ENCODE measurements at regions of chr1 and their contacts with region 1.

Region 1: GRCh38 chr1:210360852-210361477 is 32.3 kb downstream of the HHAT start:
- H3K4me3 ChIP-seq: no peak overlapping the region
- H3K27ac ChIP-seq: no peak overlapping the region
- H3K4me1 ChIP-seq: no peaks in the 10 kb centered on the region
- CTCF ChIP-seq: peak; percentile 44; the same call in 1 of the 2 replicates

Region 2: DNA sequence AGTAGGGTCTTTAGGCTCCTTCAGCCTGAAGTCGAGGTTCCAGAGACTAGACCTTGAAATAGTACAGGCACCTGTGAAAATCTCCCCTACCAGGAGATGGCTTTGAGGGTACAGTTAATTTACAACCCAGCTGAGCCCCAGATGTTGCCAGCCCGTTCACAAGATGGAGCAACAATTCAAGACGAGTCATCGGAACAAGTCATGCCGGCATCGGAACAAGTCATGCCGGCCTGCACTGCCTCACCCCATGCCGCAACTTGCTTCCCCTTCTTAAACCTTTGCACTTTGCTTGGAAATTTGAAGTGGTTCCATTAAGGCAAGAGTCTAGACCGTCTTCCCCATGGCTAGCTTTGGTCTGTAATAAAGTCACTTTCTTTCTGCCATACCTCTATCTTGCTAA is 16.3 kb before region 1 on chr1:
- CTCF ChIA-PET with region 1: interaction called, 25 read pairs
- POLR2A ChIA-PET with region 1: no interaction called
- H3K4me3 ChIP-seq: no peak overlapping the region
- H3K27ac ChIP-seq: no peak overlapping the region
- H3K4me1 ChIP-seq: peaks cover 19% of the 10 kb centered on the region
- CTCF ChIP-seq: no peak

Region 3: GRCh38 chr1:210400043-210400840 is 39.3 kb after region 1 on chr1:
- CTCF ChIA-PET with region 1: interaction called, 27 read pairs
- POLR2A ChIA-PET with region 1: no interaction called
- H3K4me3 ChIP-seq: no peak overlapping the region
- H3K27ac ChIP-seq: peak overlapping the region; percentile 32; the same call in 1 of the 2 replicates
- H3K4me1 ChIP-seq: peaks cover 4% of the 10 kb centered on the region
- CTCF ChIP-seq: peak; percentile 83